Aorta (tissue), 5 donors: ENCODE measurements at regions of chr7 and their contacts with region 1.

Region 1: DNA sequence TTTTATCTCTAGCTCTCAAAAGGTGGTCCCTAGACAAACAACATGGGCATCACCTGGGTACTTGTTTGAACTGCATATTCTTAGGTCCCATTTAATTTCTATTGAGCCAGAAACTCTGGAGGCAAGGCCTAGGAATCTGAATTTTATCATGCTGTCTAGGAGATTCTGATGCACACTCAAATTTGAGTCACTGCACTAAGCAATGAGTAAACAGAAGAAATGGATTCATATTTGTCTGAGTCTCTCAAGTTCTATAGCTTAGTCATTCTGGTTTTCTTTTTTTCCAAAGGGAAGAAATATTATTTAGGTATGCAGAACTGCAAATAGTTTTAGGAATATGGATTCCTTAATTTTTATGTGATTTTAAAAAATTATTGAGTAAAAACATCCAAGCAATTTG is 185.5 kb downstream of the SEMA3A start:
- DNase-seq: no peak
- ATAC-seq: no peak
- H3K4me3 ChIP-seq: no peak overlapping the region
- H3K27ac ChIP-seq: no peak overlapping the region
- H3K4me1 ChIP-seq: no peaks in the 10 kb centered on the region
- H3K27me3 ChIP-seq: no peaks in the 10 kb centered on the region

Region 2: DNA sequence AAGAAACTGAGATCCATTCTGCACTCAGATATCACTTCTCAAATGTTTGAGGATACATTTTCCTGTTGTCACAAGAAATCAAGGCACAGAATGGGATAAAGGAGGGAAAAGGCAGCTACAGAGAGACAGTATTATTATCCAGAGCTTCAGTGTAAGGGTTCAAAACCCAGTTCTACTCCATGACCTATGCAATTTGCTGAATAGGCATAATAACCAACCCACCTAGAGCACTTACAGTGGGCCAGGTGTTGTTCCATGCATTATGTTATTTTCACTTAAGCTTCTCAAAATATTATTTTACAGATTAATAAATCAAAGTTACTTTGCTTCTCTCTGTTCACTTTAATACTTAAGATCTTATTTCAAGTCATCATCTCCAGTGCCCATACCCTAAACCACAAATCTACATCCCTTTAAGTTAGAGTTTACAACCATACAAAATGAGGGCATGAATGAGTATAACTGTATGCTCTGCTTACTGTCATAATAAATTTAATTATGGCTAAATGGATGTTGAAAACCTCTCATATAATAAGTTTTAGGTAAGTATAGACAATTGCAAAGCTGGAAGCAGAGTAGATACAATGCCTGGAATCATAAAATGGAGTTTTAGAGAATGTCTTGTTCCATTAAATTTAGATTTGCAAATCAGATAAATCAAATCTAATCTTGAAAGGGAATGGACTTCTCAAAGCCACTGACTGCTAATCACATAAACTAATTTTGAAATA is 818.2 kb before region 1 on chr7:
- intact Hi-C with region 1: loop called in 1 of 2 experiments (anchors 5 kb)
- DNase-seq: no peak
- ATAC-seq: no peak
- H3K4me3 ChIP-seq: no peak overlapping the region
- H3K27ac ChIP-seq: no peak overlapping the region
- H3K4me1 ChIP-seq: no peaks in the 10 kb centered on the region
- H3K27me3 ChIP-seq: no peaks in the 10 kb centered on the region